CD4-positive, alpha-beta memory T cell (primary cell): ENCODE measurements at regions of chrX and their contacts with region 1.

Region 1: DNA sequence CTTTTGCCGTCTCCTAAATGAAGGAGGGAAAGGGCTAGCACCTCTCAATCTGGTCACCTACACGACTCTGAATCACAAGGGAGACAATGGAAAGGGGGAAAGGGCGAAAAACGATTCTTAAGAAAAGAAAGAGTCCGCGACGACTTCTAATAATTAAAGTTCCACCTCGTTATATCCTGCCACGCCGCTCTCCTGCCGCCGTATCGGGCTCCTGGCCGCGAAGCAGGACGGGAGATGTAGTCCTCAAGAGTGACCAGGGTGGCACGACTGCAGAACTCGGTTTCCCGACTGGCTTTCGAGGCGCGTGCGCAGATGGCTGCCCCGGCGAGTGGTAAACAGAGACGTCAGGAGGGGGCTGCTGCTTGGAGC is at the start of gene FOXO4:
- DNase-seq: peak; percentile 85 to 94 (median 89)
- H3K4me3 ChIP-seq: peak within 1 kb of the TSS; percentile 36 to 66
- H3K4me3 Mint-ChIP-seq: peak within 1 kb of the TSS; percentile 90 to 99 (median 97)
- H3K27ac ChIP-seq: peak within 1 kb of the TSS; percentile 72
- H3K27ac Mint-ChIP-seq: peak within 1 kb of the TSS; percentile 89 to 99 (median 97)
- H3K4me1 ChIP-seq: peaks cover 34% of the 10 kb centered on the region
- H3K4me1 Mint-ChIP-seq: peaks cover 22 to 44% (median 35%) of the 10 kb centered on the region in 4 donors
- H3K27me3 ChIP-seq: no peaks in the 10 kb centered on the region
- H3K27me3 Mint-ChIP-seq: no peaks in the 10 kb centered on the region
- total RNA-seq, gene FOXO4: 41.9 to 42.9 TPM

Region 2: DNA sequence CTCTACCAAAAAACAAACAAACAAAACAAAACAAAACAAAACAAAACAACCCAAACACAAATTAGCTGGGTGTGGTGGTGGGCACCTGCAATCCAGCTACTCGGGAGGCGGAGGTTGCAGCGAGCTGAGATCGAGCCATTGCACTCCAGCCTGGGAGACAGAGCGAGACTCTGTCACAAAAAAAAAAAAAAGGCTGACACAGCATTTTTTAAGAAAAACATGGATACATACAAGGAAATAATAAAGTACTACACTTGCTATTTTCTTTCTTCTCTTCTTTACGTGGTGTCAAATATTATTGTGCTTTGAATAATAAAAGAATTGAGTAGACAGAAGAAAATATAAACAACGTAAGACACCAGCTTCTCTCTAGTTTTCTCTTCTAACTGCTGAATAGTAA is 260.9 kb before region 1 on chrX:
- CTCF ChIA-PET with region 1: no interaction called
- POLR2A ChIA-PET with region 1: no interaction called
- intact Hi-C with region 1: no loop called
- DNase-seq: no peak
- H3K4me3 ChIP-seq: no peak overlapping the region
- H3K4me3 Mint-ChIP-seq: no peak overlapping the region
- H3K27ac ChIP-seq: no peak overlapping the region
- H3K27ac Mint-ChIP-seq: no peak overlapping the region
- H3K4me1 ChIP-seq: no peaks in the 10 kb centered on the region
- H3K4me1 Mint-ChIP-seq: no peaks in the 10 kb centered on the region
- H3K27me3 ChIP-seq: no peaks in the 10 kb centered on the region
- H3K27me3 Mint-ChIP-seq: peaks cover 2 to 4% of the 10 kb centered on the region in 2 donors

Region 3: DNA sequence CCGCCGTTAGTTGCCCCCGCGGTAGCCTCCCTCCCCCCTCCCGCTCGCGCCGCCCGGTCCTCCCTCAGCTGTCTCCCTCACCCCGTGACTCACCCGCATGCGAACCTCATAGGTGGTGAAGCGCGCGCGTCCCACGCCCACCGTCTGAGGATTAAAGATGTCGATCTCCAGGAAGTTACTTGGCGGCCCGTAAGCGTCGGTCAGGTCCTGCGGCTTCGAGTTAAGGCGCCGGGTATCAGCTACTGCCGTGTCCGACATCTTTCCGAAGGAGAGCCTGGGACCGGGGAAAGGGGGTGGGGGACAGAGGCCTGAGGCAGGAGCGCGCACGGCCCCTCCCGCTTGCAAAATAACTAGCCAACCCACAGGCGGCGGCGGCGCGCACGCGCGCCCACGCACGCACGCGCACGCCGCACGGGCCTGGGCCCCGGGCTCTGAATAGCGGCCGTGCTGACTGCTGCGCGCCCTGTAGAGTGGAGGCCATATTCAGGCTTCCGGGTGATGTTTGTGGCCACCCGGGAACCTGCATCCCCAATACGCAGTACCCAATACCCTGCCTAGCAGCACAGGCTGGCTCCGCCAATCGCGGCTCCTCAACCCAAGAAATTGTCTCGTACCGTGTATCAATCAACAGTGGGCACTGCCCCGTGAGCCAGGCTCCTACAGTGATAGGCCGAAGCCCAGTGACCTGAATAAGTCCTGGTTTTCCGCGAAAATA is 27.3 kb before region 1 on chrX and contains the start of gene SNX12:
- CTCF ChIA-PET with region 1: no interaction called
- POLR2A ChIA-PET with region 1: interaction called, 7 read pairs
- intact Hi-C with region 1: loop called (anchors 1 kb)
- DNase-seq: peak; percentile 88 to 93 (median 91)
- H3K4me3 ChIP-seq: peak within 1 kb of the TSS; percentile 53 to 69
- H3K4me3 Mint-ChIP-seq: peak within 1 kb of the TSS; percentile 88 to 97 (median 93)
- H3K27ac ChIP-seq: peak within 1 kb of the TSS; percentile 84
- H3K27ac Mint-ChIP-seq: peak within 1 kb of the TSS; percentile 93 to 98 (median 97)
- H3K4me1 ChIP-seq: peaks cover 16% of the 10 kb centered on the region
- H3K4me1 Mint-ChIP-seq: peaks cover 2 to 33% (median 14%) of the 10 kb centered on the region in 4 donors
- H3K27me3 ChIP-seq: no peaks in the 10 kb centered on the region
- H3K27me3 Mint-ChIP-seq: no peaks in the 10 kb centered on the region
- total RNA-seq, gene SNX12: 36.7 to 36.9 TPM

Region 4: DNA sequence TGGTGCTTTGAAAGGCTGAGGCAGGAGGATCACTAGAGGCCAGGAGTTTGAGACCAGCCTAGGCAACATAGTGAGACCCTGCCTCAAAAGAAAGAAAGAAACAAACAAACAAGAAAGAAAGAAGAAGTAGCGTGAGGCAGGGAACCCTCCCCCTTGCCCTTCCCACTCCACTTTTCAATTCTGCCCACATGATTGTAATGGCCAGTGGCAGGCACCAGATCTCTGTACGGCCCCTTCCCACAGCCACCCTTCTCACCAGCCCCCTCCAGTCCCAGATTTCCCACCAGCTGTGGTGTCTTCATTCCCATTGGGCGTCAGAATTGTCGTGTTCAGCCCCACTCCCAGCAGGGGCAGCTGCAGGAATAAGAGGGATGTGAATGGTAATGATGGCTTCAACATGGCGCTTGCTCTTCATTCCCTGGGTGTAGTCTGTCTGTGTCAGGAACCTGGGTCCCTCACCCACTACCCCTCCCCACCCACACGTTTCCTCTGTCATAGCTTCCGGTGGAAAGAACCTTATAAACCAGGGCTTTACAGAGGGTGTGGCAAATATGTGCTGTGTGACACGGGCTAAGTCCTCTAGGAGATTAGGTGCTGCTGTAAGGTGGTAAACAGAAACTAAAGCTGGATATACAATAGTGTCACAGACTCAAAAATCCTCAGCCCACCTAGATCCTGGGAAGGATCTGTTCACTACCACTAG is 15.8 kb after region 1 on chrX and contains the start of gene IL2RG:
- CTCF ChIA-PET with region 1: interaction called, 32 read pairs
- POLR2A ChIA-PET with region 1: interaction called, 141 read pairs
- intact Hi-C with region 1: loop called (anchors 1 kb)
- DNase-seq: peak; percentile 89 to 95 (median 93)
- H3K4me3 ChIP-seq: peak within 1 kb of the TSS; percentile 81 to 93
- H3K4me3 Mint-ChIP-seq: peak within 1 kb of the TSS; percentile 90 to 99 (median 95)
- H3K27ac ChIP-seq: peak within 1 kb of the TSS; percentile 96
- H3K27ac Mint-ChIP-seq: peak within 1 kb of the TSS; percentile 97 to 99 (median 99)
- H3K4me1 ChIP-seq: peaks cover 46% of the 10 kb centered on the region
- H3K4me1 Mint-ChIP-seq: peaks cover 24 to 69% (median 53%) of the 10 kb centered on the region in 4 donors
- H3K27me3 ChIP-seq: no peaks in the 10 kb centered on the region
- H3K27me3 Mint-ChIP-seq: no peaks in the 10 kb centered on the region
- total RNA-seq, gene IL2RG: 378 to 379 TPM

Region 5: DNA sequence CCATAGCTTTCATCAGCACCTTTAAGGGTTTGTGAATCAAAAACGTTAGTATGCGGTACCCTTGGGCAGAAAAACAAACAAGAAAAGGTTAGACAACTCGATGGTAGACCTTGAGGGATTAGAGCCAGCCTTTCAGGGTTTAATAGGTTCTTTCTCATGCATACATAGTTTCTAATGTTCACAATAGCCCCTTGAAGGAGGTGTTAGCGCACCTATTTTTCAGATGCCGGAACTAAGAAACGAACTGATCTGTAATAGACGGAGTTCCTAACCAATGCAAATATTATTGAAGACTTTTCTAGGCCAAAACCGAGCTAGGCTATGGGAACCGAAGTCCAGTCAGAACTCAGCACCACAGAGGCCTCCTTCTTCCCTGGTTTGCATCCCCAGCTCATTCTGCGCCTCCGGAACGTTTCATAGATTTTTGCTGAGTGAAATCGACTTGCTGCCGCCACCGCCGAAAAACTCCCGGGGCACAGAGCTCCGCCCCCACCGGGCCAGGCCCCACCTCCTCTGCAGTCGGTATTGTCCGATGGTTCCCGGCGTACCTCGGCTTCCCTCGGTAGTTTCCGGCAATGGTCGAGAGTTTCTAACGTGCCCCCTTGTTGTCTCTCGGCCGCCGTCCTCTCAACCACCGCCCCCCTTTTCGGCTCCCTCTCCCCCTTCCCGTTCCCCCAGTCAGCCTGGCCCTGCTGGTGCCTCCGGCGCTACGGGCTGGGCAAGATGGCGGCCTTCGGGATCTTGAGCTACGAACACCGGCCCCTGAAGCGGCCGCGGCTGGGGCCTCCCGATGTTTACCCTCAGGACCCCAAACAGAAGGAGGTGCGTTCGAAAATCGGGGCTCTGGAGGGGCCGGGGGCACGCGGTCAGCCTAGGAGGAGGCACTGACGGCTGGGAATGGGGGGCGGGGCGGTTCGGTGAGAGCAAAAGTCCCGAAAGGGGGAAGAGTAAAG is 22.8 kb after region 1 on chrX and contains the start of gene MED12:
- CTCF ChIA-PET with region 1: interaction called, 32 read pairs
- POLR2A ChIA-PET with region 1: interaction called, 141 read pairs
- intact Hi-C with region 1: loop called (anchors 1 kb)
- DNase-seq: peak; percentile 75 to 83 (median 78)
- H3K4me3 ChIP-seq: peak within 1 kb of the TSS; percentile 36 to 69
- H3K4me3 Mint-ChIP-seq: peak within 1 kb of the TSS; percentile 84 to 90 (median 89)
- H3K27ac ChIP-seq: peak within 1 kb of the TSS; percentile 88
- H3K27ac Mint-ChIP-seq: peak within 1 kb of the TSS; percentile 90 to 95 (median 95)
- H3K4me1 ChIP-seq: peaks cover 26% of the 10 kb centered on the region
- H3K4me1 Mint-ChIP-seq: peaks cover 15 to 47% (median 29%) of the 10 kb centered on the region in 4 donors
- H3K27me3 ChIP-seq: no peaks in the 10 kb centered on the region
- H3K27me3 Mint-ChIP-seq: no peaks in the 10 kb centered on the region
- total RNA-seq, gene MED12: 84.4 to 89.9 TPM

Region 6: GRCh38 chrX:71128915-71129765 is 33.6 kb after region 1 on chrX:
- CTCF ChIA-PET with region 1: interaction called, 75 read pairs
- POLR2A ChIA-PET with region 1: interaction called, 47 read pairs
- intact Hi-C with region 1: loop called (anchors 1 kb)
- DNase-seq: peak; percentile 76 to 80 (median 80)
- H3K4me3 ChIP-seq: no peak overlapping the region
- H3K4me3 Mint-ChIP-seq: peak overlapping the region in 4 of 8 donors; percentile 0 to 64 (median 21)
- H3K27ac ChIP-seq: peak overlapping the region; percentile 28
- H3K27ac Mint-ChIP-seq: peak overlapping the region; percentile 38 to 94 (median 89)
- H3K4me1 ChIP-seq: peaks cover 13% of the 10 kb centered on the region
- H3K4me1 Mint-ChIP-seq: peaks cover 7 to 18% (median 15%) of the 10 kb centered on the region in 4 donors
- H3K27me3 ChIP-seq: no peaks in the 10 kb centered on the region
- H3K27me3 Mint-ChIP-seq: no peaks in the 10 kb centered on the region

Region 7: DNA sequence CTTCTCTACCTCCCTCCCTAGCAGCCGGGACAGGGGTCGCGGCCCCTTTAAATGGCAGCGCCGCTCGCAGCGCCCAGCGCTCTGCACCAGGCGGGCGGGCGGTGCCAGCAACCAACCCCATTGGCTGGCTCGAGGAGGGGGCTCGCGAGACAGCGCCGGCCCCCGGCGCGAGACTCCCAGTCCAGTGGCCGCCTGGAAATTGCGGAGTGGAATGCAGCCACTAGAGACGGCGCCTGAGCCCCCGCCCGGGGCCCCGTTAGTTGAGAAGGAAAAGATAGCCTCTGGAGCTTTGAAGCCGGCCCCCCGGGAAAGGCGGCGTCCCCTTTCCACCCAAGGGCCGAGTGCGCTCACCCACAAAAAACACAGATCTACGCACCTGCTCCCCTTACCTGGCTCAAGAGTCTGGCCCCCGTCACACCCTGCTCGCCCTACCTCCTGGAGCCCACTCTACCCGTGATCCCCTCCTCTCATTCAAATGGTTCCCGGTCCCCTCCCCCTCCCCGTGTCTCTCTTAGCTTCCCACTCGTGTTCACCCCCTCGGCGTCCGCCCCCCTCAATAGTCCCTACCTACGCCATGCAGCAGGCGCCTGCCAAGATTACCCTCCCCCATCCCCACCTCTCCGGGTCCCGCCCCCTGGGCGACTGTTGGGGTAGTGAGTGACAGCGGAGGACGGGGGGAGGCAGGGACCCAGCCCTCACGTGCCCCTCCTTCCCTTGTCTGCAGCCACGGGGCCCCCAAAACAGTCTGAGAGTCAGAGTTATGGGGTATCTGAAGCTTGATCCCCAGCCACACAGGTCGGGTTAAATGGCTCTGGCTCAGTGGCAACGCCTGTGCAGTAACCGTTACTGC is 158.8 kb after region 1 on chrX and contains the start of gene ZMYM3:
- CTCF ChIA-PET with region 1: no interaction called
- POLR2A ChIA-PET with region 1: no interaction called
- intact Hi-C with region 1: loop called (anchors 2 kb)
- DNase-seq: peak; percentile 75 to 86 (median 77)
- H3K4me3 ChIP-seq: peak within 1 kb of the TSS; percentile 52 to 81
- H3K4me3 Mint-ChIP-seq: peak within 1 kb of the TSS; percentile 90 to 98 (median 92)
- H3K27ac ChIP-seq: peak within 1 kb of the TSS; percentile 77
- H3K27ac Mint-ChIP-seq: peak within 1 kb of the TSS; percentile 93 to 97 (median 95)
- H3K4me1 ChIP-seq: peaks cover 25% of the 10 kb centered on the region
- H3K4me1 Mint-ChIP-seq: peaks cover 5 to 32% (median 13%) of the 10 kb centered on the region in 4 donors
- H3K27me3 ChIP-seq: no peaks in the 10 kb centered on the region
- H3K27me3 Mint-ChIP-seq: no peaks in the 10 kb centered on the region
- total RNA-seq, gene ZMYM3: 28.0 to 28.2 TPM

Region 8: GRCh38 chrX:71466979-71467523 is 371.5 kb after region 1 on chrX:
- CTCF ChIA-PET with region 1: no interaction called
- POLR2A ChIA-PET with region 1: no interaction called
- intact Hi-C with region 1: no loop called
- DNase-seq: no peak
- H3K4me3 ChIP-seq: no peak overlapping the region
- H3K4me3 Mint-ChIP-seq: no peak overlapping the region
- H3K27ac ChIP-seq: no peak overlapping the region
- H3K27ac Mint-ChIP-seq: no peak overlapping the region
- H3K4me1 ChIP-seq: no peaks in the 10 kb centered on the region
- H3K4me1 Mint-ChIP-seq: no peaks in the 10 kb centered on the region
- H3K27me3 ChIP-seq: no peaks in the 10 kb centered on the region
- H3K27me3 Mint-ChIP-seq: no peaks in the 10 kb centered on the region